HEK293 (cell line): ENCODE measurements at regions of chr12 and their contacts with region 1.

Region 1: GRCh38 chr12:47651368-47652254 is 54.2 kb downstream of the RPAP3 start:
- H3K4me3 ChIP-seq: no peak overlapping the region
- H3K27ac ChIP-seq: no peak overlapping the region
- H3K4me1 ChIP-seq: no peaks in the 10 kb centered on the region; the same call in 1 of the 2 replicates
- CTCF ChIP-seq: no peak

Region 2: DNA sequence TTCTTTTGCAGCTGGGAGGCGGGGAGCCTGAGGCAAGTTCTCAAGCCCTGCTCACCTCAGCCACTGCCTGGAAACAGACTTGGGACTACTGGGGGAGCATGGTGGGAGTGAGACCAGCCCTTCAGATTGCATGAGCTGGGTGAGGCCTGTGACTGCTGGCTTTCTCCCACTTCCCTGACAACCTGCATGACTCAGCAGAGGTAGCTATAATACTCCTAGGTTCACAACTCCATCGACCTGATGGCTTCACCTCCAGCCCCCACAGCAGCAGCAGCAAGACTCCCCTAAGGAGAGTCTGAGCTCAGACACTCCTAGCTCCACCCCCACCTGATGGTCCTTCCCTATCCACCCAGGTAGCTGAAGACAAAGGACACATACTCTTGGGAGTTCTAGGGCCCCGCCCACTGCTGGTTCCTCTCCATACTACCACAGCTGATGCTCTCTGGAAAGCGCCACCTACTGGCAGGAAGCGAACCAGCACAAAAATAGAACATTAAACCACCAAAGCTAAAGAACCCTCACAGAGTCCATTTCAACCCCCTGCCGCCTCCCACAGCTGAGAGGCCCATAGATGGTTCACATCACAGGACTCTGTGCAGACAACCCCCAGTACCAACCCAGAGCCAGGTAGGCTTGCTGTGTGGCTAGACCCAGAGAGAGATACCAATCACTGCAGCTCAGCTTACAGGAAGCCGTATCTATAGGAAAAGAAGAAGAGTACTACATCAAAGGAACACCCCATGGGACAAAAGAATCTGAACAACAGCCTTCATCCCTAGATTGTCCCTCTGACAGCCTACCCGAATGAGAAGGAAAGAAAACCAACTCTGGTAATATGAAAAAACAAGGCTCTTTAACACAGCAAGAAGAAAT is 14.5 kb before region 1 on chr12:
- CTCF ChIA-PET with region 1: interaction called, 17 read pairs
- POLR2A ChIA-PET with region 1: no interaction called
- H3K4me3 ChIP-seq: no peak overlapping the region
- H3K27ac ChIP-seq: no peak overlapping the region
- H3K4me1 ChIP-seq: no peaks in the 10 kb centered on the region
- CTCF ChIP-seq: no peak

Region 3: GRCh38 chr12:47686645-47687240 is 35.1 kb after region 1 on chr12:
- CTCF ChIA-PET with region 1: interaction called, 21 read pairs
- POLR2A ChIA-PET with region 1: no interaction called
- H3K4me3 ChIP-seq: no peak overlapping the region
- H3K27ac ChIP-seq: no peak overlapping the region
- H3K4me1 ChIP-seq: no peaks in the 10 kb centered on the region
- CTCF ChIP-seq: peak; percentile 45

Region 4: GRCh38 chr12:47705566-47706425 is 54.2 kb after region 1 on chr12 and contains the start of gene RPAP3:
- CTCF ChIA-PET with region 1: no interaction called
- POLR2A ChIA-PET with region 1: no interaction called
- H3K4me3 ChIP-seq: peak within 1 kb of the TSS; percentile 97
- H3K27ac ChIP-seq: peak within 1 kb of the TSS; percentile 44; the same call in 1 of the 2 replicates
- H3K4me1 ChIP-seq: no peaks in the 10 kb centered on the region
- CTCF ChIP-seq: peak; percentile 70